Heart right ventricle (tissue), 16 donors: ENCODE measurements at regions of chr7 and their contacts with region 1.

Region 1: GRCh38 chr7:143008007-143008901 is 18.7 kb downstream of the OR9A2 start:
- DNase-seq: peak; percentile 77 to 81
- ATAC-seq: peak; percentile 69 to 95 (median 90)
- H3K4me3 ChIP-seq: no peak overlapping the region
- H3K27ac ChIP-seq: no peak overlapping the region
- H3K4me1 ChIP-seq: peaks cover 0 to 6% (median 0%) of the 10 kb centered on the region in 9 donors
- H3K27me3 ChIP-seq: peaks cover 0 to 26% (median 0%) of the 10 kb centered on the region in 7 donors
- CTCF ChIP-seq: peak; percentile 87 to 99 (median 97)

Region 2: GRCh38 chr7:142626420-142627035 is 381.7 kb before region 1 on chr7:
- intact Hi-C with region 1: loop called in 1 of 10 experiments (anchors 10 kb)
- DNase-seq: peak in 1 of 2 donors; percentile 24
- ATAC-seq: peak in 1 of 8 donors; percentile 33
- H3K4me3 ChIP-seq: no peak overlapping the region
- H3K27ac ChIP-seq: no peak overlapping the region
- H3K4me1 ChIP-seq: no peaks in the 10 kb centered on the region
- H3K27me3 ChIP-seq: peaks cover 0 to 58% (median 26%) of the 10 kb centered on the region in 7 donors
- CTCF ChIP-seq: peak; percentile 31 to 63 (median 49)

Region 3: DNA sequence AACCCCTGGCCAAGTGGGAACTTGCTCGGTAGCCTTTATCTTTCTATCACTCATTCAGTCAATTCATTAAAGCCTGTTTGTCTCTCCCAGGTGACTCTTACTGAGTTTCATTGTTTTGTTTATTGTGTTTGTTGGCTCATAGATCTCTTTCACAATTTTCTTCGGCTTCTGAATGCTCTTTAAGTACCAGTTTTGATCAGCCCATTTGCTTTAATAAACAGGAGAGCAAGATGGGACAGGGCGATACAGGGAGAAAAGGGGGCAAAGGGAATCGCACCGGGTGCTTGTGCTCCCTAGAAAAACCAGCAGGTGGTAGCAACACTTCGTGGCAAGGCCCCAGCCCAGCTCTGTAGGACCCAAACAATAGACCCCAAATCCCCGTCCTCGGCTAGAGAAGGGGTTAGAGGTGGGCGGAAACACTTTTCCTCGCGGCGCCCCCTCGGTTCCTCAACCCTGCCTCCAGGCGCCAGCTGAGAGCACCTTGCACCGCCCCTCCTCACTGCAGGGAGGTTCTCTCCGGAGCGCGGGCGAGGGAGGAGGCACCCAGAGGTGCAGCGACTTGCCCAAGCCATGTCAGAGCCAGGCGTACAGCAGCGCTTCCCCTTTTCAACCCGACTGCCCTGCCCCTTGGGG is 154.4 kb before region 1 on chr7:
- intact Hi-C with region 1: loop called (anchors 1 to 10 kb)
- DNase-seq: peak; percentile 49 to 60
- ATAC-seq: peak; percentile 56 to 86 (median 80)
- H3K4me3 ChIP-seq: peak overlapping the region; percentile 53 to 75 (median 70)
- H3K27ac ChIP-seq: peak overlapping the region in 9 of 10 donors; percentile 14 to 84 (median 56)
- H3K4me1 ChIP-seq: peaks cover 0 to 23% (median 17%) of the 10 kb centered on the region in 9 donors
- H3K27me3 ChIP-seq: peaks cover 0 to 24% (median 11%) of the 10 kb centered on the region in 7 donors
- CTCF ChIP-seq: peak; percentile 46 to 86 (median 74)

Region 4: GRCh38 chr7:142880876-142881505 is 127.3 kb before region 1 on chr7:
- intact Hi-C with region 1: loop called in 1 of 10 experiments (anchors 5 kb)
- DNase-seq: no peak
- ATAC-seq: no peak
- H3K4me3 ChIP-seq: no peak overlapping the region
- H3K27ac ChIP-seq: no peak overlapping the region
- H3K4me1 ChIP-seq: no peaks in the 10 kb centered on the region
- H3K27me3 ChIP-seq: peaks cover 0 to 61% (median 35%) of the 10 kb centered on the region in 7 donors
- CTCF ChIP-seq: peak in 8 of 9 donors; percentile 33 to 82 (median 52)

Region 5: GRCh38 chr7:143214789-143215679 is 206.8 kb after region 1 on chr7:
- intact Hi-C with region 1: loop called (anchors 1 to 5 kb)
- DNase-seq: peak in 1 of 2 donors; percentile 56
- ATAC-seq: peak in 7 of 8 donors; percentile 23 to 82 (median 65)
- H3K4me3 ChIP-seq: no peak overlapping the region
- H3K27ac ChIP-seq: no peak overlapping the region
- H3K4me1 ChIP-seq: no peaks in the 10 kb centered on the region
- H3K27me3 ChIP-seq: peaks cover 0 to 7% (median 0%) of the 10 kb centered on the region in 7 donors
- CTCF ChIP-seq: peak; percentile 97 to 100 (median 99)